ENCODE measurements at regions of chr7 and their contacts with region 1.

Region 1: GRCh38 chr7:138478499-138478908 is 18.4 kb downstream of the TRIM24 start:
- DNase-seq: peak; percentile 40
- ATAC-seq: peak; percentile 92
- H3K4me3 ChIP-seq: peak overlapping the region; percentile 33; the same call in 1 of the 2 replicates
- H3K27ac ChIP-seq: peak overlapping the region; percentile 53
- H3K4me1 ChIP-seq: peaks cover 11% of the 10 kb centered on the region
- H3K27me3 ChIP-seq: no peaks in the 10 kb centered on the region
- CTCF ChIP-seq: no peak
- EP300 ChIP-seq: 0 out of 4 replicates have a peak, but pooled peaks of 1 of the 2 experiments have one; percentile 33
- POLR2A ChIP-seq: no peak
- RAD21 ChIP-seq: no peak

Region 2: DNA sequence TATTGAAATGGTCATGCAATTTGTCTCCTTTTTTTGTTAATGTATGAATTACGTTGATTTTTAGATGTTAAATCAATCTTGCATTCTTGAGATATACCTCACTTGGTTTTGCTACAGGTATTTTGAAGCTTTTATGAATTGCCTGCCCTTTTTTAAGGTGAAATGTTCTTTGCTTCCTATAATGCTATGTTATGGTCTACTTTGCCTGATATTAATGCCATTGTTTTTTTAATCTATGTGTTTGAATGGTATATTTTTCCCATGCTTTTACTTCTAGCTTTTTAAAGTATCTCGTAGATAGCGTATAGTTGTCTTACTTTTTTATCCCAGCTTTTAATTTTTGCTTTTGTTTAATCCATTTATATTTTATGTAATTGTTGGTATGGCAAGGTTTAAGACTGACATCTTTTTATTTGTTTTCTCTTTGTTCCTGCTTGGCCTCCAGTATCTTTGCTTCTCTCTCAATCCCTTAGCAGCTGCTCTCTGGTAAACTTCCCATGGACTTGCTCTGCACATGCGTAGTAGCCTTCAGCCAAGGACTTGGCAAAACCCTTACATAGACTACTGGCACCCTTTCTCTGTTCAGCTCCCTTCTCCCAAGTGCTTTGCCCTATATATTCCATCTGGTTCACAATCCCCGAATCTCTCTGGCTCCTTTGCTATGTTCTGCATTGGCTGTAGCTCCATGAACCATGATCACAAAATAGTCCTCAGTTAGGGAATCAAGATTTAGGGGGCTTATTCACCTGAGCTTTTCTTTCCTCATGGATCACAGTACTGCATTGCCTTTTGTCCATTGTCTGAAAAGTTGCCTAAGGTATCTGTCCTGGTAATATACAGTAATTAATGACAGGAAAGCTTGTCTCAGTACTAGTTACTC is 10.0 kb before region 1 on chr7:
- CTCF ChIA-PET with region 1: interaction called, 9 read pairs
- POLR2A ChIA-PET with region 1: interaction called, 31 read pairs
- RAD21 ChIA-PET with region 1: interaction called, 17 read pairs
- SMC1A ChIA-PET with region 1: interaction called, 67 read pairs
- in situ Hi-C with region 1: no loop called
- intact Hi-C with region 1: no loop called
- DNase-seq: no peak
- ATAC-seq: no peak
- H3K4me3 ChIP-seq: no peak overlapping the region
- H3K27ac ChIP-seq: no peak overlapping the region
- H3K4me1 ChIP-seq: 0 out of 2 replicates have a peak, but pooled peaks cover 4% of the 10 kb centered on the region
- H3K27me3 ChIP-seq: no peaks in the 10 kb centered on the region
- CTCF ChIP-seq: no peak
- EP300 ChIP-seq: no peak
- POLR2A ChIP-seq: no peak
- RAD21 ChIP-seq: no peak